ENCODE measurements at regions of chr10 and their contacts with region 1.

Region 1: DNA sequence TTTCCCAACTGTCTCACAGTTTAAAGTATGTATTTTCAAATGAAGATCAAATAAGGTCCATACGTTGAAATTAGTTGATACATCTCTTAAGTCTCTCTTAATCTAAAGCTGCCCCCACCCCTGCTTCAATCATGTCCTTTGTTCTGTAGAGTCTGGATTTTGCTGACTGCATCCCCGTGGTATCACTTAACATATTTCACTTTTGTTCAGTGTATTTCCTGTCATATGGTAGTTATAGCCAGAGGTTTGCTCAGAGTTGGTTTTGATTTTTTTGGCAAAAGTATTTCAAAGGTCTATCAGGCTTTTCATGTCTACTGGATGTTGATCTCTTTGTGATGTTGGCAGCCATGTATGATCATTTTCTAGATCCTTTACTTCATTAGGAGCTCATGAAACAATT is 54.4 kb upstream of the ARID5B start:
- DNase-seq: no peak
- ATAC-seq: no peak
- H3K4me3 ChIP-seq: no peak overlapping the region
- H3K27ac ChIP-seq: no peak overlapping the region
- H3K4me1 ChIP-seq: peaks cover 38% of the 10 kb centered on the region
- H3K27me3 ChIP-seq: no peaks in the 10 kb centered on the region
- CTCF ChIP-seq: no peak

Region 2: DNA sequence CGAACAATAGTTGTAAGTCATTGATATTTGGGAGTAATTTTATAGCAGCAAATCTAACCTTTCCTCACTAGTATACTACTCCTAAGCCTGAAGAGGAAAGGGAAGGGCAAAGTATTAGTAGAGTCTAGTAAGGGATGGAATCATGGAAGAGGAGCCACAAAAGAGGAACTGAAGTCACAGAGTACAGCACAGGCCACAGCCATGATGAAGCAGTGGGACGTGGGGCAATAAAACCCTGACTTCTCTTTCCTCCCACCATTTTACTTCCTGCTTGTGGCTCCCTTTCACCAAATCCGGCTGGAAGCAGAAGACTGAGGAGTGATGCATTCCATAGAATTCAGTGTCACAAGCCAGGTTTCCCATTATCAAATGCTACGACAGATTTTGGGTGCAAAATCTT is 125.7 kb before region 1 on chr10:
- CTCF ChIA-PET with region 1: no interaction called
- POLR2A ChIA-PET with region 1: no interaction called
- intact Hi-C with region 1: no loop called
- DNase-seq: no peak
- ATAC-seq: no peak
- H3K4me3 ChIP-seq: no peak overlapping the region
- H3K27ac ChIP-seq: no peak overlapping the region
- H3K4me1 ChIP-seq: no peaks in the 10 kb centered on the region
- H3K27me3 ChIP-seq: no peaks in the 10 kb centered on the region
- CTCF ChIP-seq: no peak

Region 3: GRCh38 chr10:61830072-61830845 is 16.8 kb before region 1 on chr10:
- CTCF ChIA-PET with region 1: no interaction called
- POLR2A ChIA-PET with region 1: no interaction called
- intact Hi-C with region 1: no loop called
- DNase-seq: no peak
- ATAC-seq: no peak
- H3K4me3 ChIP-seq: no peak overlapping the region
- H3K27ac ChIP-seq: no peak overlapping the region
- H3K4me1 ChIP-seq: peaks cover 37% of the 10 kb centered on the region
- H3K27me3 ChIP-seq: no peaks in the 10 kb centered on the region
- CTCF ChIP-seq: no peak

Region 4: DNA sequence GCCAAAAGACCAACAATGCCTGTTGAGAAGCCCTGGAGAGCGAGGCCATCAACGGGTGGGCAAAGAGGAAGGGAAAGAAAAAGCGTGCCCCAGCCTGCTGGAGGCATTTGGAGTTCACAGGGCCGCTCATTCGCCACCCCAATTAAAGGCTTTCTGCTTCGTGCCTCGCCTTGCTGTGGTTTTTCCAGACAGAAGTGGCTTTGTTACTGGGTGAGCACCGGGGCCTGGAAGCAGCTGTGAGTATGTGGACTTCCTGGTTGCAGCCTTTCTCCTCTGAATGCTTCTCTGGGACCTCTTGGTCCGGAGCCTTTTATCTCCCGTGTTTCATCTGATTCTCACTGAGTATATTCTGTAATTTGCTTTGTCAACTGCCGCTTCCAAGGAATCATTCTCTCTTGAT is 1087.2 kb after region 1 on chr10:
- CTCF ChIA-PET with region 1: interaction called, 12 read pairs
- POLR2A ChIA-PET with region 1: no interaction called
- intact Hi-C with region 1: no loop called
- DNase-seq: no peak
- ATAC-seq: peak; percentile 61
- H3K4me3 ChIP-seq: no peak overlapping the region
- H3K27ac ChIP-seq: no peak overlapping the region
- H3K4me1 ChIP-seq: no peaks in the 10 kb centered on the region
- H3K27me3 ChIP-seq: no peaks in the 10 kb centered on the region
- CTCF ChIP-seq: no peak

Measured in PC-3 (cell line).